ENCODE measurements at regions of chr19 and their contacts with region 1.

Region 1: DNA sequence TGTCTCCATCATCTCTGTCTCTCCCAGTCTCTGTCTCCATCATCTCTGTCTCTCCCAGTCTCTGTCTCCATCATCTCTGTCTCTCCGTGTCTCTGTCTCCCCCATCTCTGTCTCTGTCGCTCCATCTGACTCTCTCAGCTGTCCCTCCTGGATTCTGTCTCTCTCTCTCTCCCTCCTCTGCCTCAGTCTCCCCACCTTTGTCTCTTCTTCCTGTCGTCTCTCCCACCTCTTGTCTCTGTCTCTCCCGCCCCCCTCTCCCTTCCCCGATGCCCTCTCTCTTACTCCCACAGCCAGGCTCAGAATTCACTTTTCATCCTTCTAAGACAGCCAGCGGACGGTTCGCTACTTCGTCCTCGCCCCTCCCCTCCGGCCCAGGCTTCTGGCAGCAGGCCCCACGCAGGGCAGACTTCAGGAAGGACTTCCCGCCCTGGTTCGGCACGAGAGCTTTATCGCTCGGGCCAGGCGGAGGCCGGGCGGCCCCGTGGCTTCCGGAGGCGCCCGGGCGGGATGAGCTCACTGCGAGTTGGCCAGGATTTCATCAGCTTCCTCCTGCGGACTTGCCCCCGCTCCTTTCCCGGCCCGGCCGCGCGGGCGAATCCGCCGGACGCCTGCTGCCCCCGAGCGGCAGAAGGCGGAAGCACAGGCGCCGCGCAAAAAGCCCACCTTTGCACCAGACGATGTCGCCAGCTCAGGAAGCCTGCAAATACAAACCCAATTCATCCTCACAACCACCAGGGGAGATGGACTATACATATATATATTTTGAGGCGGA is 12.4 kb upstream of the CCDC9 start:
- DNase-seq: peak; percentile 77
- H3K4me3 ChIP-seq: peak overlapping the region; percentile 57
- CTCF ChIP-seq: peak; percentile 97

Region 2: GRCh38 chr19:47035127-47036096 is 208.6 kb before region 1 on chr19:
- CTCF ChIA-PET with region 1: interaction called, 11 read pairs
- POLR2A ChIA-PET with region 1: no interaction called
- DNase-seq: no peak
- H3K4me3 ChIP-seq: peak overlapping the region; percentile 57
- CTCF ChIP-seq: peak; percentile 98

Region 3: GRCh38 chr19:47130591-47131227 is 113.3 kb before region 1 on chr19 and contains the start of gene SAE1:
- CTCF ChIA-PET with region 1: interaction called, 15 read pairs
- POLR2A ChIA-PET with region 1: no interaction called
- DNase-seq: peak; percentile 86
- H3K4me3 ChIP-seq: peak within 1 kb of the TSS; percentile 93
- CTCF ChIP-seq: peak; percentile 79

Region 4: GRCh38 chr19:47168065-47168464 is 75.9 kb before region 1 on chr19:
- CTCF ChIA-PET with region 1: interaction called, 512 read pairs
- POLR2A ChIA-PET with region 1: no interaction called
- DNase-seq: no peak
- H3K4me3 ChIP-seq: no peak overlapping the region
- CTCF ChIP-seq: no peak

Region 5: DNA sequence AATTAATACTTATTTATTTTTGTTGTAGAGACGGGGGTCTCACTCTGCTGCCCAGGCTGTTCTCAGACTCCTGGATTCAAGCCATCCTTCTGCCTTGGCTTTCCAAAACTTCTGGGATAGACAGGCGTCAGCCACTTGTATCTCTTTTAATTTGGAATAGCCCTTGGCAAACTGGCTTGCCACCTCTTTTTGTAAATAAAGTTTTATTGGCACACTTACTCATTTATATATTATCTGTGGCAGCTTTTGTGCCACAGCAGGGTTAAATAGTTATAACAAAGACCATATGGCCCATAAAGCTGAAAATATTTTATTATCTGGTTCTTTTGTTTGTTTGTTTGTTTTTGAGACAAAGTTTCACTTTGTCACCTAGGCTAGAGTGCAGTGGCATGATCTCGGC is 43.4 kb before region 1 on chr19:
- CTCF ChIA-PET with region 1: interaction called, 570 read pairs
- POLR2A ChIA-PET with region 1: no interaction called
- DNase-seq: no peak
- H3K4me3 ChIP-seq: no peak overlapping the region
- CTCF ChIP-seq: no peak

Region 6: GRCh38 chr19:47231215-47231984 is 12.6 kb before region 1 on chr19:
- CTCF ChIA-PET with region 1: interaction called, 104 read pairs
- POLR2A ChIA-PET with region 1: interaction called, 79 read pairs
- DNase-seq: no peak
- H3K4me3 ChIP-seq: peak overlapping the region; percentile 95
- CTCF ChIP-seq: no peak

Measured in AG04449 (cell line).